H1 (cell line): ENCODE measurements at regions of chr2 and their contacts with region 1.

Region 1: GRCh38 chr2:105294844-105295481 is 34.6 kb downstream of the TGFBRAP1 start:
- DNase-seq: peak; percentile 44 to 74
- H3K4me3 ChIP-seq: no peak overlapping the region
- H3K27ac ChIP-seq: no peak overlapping the region
- H3K4me1 ChIP-seq: no peaks in the 10 kb centered on the region
- H3K27me3 ChIP-seq: no peaks in the 10 kb centered on the region
- CTCF ChIP-seq: peak; percentile 31 to 71 (median 71)
- EP300 ChIP-seq: no peak
- POLR2A ChIP-seq: no peak
- RAD21 ChIP-seq: peak; percentile 66 to 67

Region 2: DNA sequence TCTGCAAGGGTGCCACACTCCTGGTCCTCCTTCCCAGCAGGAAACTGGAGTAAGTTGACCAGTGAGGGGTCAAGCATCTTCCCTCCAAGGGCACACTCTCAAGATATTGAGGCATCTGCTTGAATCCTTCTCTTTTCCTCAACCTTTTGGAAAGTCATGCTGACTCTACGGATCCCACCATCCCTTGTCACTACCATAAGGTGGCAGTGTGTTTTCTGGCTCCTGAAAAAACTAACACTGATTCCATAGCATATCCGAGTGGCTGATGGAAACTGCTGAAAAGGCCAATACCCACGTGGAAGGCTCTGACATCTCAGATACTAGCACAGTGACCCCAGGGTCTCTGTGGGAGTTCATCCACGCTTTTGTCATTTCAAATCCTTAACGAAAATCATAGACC is 16.3 kb before region 1 on chr2:
- CTCF ChIA-PET with region 1: interaction called, 17 read pairs
- POLR2A ChIA-PET with region 1: no interaction called
- DNase-seq: no peak
- H3K4me3 ChIP-seq: no peak overlapping the region
- H3K27ac ChIP-seq: no peak overlapping the region
- H3K4me1 ChIP-seq: no peaks in the 10 kb centered on the region
- H3K27me3 ChIP-seq: no peaks in the 10 kb centered on the region
- CTCF ChIP-seq: peak in 1 of 3 experiments; percentile 39; a peak in 1 of 4 replicates
- EP300 ChIP-seq: no peak
- POLR2A ChIP-seq: no peak
- RAD21 ChIP-seq: no peak; a peak in 1 of 4 replicates

Region 3: DNA sequence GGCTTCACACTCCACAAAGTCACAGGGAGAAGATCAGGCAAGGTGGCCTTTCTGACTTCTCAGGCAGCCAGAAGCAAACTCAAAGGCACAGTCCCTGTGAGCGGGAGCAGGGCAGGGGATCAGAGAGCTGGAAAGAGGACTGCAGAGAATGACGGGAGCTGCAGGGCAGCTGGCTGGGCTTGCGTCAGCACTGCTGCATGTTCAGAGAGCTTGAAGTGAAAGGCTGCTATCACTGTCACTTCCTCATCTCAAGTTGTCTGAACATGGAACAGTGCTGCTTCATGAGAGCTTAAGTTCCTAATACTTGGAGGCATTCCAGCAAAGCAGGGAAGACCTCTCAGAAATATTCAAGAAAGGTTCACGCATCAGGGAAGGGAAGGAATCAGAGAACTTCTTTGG is 14.2 kb after region 1 on chr2:
- CTCF ChIA-PET with region 1: interaction called, 39 read pairs
- POLR2A ChIA-PET with region 1: interaction called, 6 read pairs
- DNase-seq: no peak
- H3K4me3 ChIP-seq: no peak overlapping the region
- H3K27ac ChIP-seq: no peak overlapping the region
- H3K4me1 ChIP-seq: peaks cover 3 to 9% (median 5%) of the 10 kb centered on the region in 4 experiments; a peak in 3 of 7 replicates
- H3K27me3 ChIP-seq: no peaks in the 10 kb centered on the region
- CTCF ChIP-seq: no peak
- EP300 ChIP-seq: no peak
- POLR2A ChIP-seq: no peak
- RAD21 ChIP-seq: no peak